Endothelial cell of umbilical vein (primary cell): ENCODE measurements at regions of chr1 and their contacts with region 1.

Region 1: GRCh38 chr1:151945725-151946364 is 36.5 kb upstream of the THEM4 start:
- DNase-seq: peak; percentile 90
- H3K4me3 ChIP-seq: no peak overlapping the region
- H3K27ac ChIP-seq: peak overlapping the region; percentile 58
- H3K4me1 ChIP-seq: peaks cover 19% of the 10 kb centered on the region
- H3K27me3 ChIP-seq: no peaks in the 10 kb centered on the region
- CTCF ChIP-seq: no peak
- POLR2A ChIP-seq: no peak

Region 2: DNA sequence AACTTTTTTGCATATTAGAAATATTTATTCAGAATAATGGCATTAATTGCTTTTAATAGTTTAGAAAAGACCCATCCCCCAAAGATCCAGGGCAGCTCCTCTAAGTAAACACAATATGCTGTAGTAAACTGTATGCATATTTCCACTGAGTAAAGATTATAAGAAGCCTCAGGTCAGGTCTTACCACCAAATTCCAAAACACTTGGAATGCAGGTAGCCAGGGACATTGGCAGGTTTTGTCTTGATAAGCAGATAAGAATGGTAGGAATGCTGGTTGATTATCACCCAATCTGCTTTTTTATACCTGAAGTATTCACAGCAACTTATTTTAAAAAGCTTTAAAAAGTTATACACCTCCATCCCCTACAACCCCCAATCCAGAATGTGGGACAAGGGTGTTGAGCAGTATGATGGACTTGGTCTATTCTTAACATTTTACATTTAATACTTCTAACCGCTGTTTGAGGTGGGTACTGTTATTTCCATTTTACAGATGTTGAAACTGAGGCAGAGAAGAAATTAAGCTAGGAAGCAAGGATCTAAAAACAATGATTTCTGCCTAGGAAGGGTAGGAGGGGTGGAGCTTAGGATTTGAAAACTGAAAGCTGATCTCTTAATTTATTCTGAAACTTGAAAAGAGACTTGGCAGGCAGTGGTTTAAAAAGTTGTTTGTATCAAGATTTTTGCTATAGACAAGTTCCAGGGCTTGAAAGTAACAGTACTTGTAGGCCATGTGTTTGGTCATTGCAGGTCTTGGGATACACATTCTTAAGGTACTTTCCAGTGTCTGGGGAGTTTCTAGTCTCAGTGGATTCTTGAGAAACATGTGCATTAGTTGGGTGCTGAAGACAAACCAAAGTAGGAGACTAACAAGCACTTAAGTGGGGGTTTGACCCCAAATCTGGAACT is 20.9 kb before region 1 on chr1:
- CTCF ChIA-PET with region 1: no interaction called
- POLR2A ChIA-PET with region 1: no interaction called
- dilution Hi-C with region 1: no loop called
- intact Hi-C with region 1: no loop called
- DNase-seq: no peak
- H3K4me3 ChIP-seq: no peak overlapping the region
- H3K27ac ChIP-seq: no peak overlapping the region
- H3K4me1 ChIP-seq: no peaks in the 10 kb centered on the region
- H3K27me3 ChIP-seq: peaks cover 2 to 5% of the 10 kb centered on the region in 2 experiments
- CTCF ChIP-seq: no peak
- POLR2A ChIP-seq: no peak

Region 3: DNA sequence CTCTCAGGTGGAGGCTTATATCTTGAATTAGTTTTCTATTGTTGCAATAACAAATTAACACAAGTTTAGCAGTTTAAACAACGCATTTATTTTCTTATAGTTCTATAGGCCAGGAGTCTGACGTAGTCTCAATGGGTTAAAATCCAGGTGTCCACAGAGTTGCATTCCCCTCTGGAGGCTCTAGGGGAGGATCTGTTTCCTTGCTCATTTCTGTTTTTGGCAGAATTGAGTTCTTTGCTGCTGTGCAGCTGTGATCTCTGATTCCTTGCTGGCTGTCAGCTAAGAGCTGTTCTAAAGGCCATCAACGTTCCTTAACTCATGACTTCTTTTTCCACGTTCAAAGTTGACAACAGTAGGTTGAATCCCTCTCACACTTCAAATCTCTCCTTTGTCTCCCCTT is 16.0 kb after region 1 on chr1:
- CTCF ChIA-PET with region 1: interaction called, 17 read pairs
- POLR2A ChIA-PET with region 1: no interaction called
- dilution Hi-C with region 1: no loop called
- intact Hi-C with region 1: loop called (anchors 2 kb)
- DNase-seq: peak; percentile 24
- H3K4me3 ChIP-seq: no peak overlapping the region
- H3K27ac ChIP-seq: no peak overlapping the region
- H3K4me1 ChIP-seq: peaks cover 27% of the 10 kb centered on the region
- H3K27me3 ChIP-seq: no peaks in the 10 kb centered on the region
- CTCF ChIP-seq: no peak
- POLR2A ChIP-seq: no peak

Region 4: GRCh38 chr1:151993654-151994496 is 48.0 kb after region 1 on chr1 and contains the start of gene S100A10:
- CTCF ChIA-PET with region 1: interaction called, 572 read pairs
- POLR2A ChIA-PET with region 1: no interaction called
- dilution Hi-C with region 1: no loop called
- intact Hi-C with region 1: loop called (anchors 1 kb)
- DNase-seq: peak; percentile 67
- H3K4me3 ChIP-seq: peak within 1 kb of the TSS; percentile 22 to 70 (median 67)
- H3K27ac ChIP-seq: peak within 1 kb of the TSS; percentile 83
- H3K4me1 ChIP-seq: peaks cover 44% of the 10 kb centered on the region
- H3K27me3 ChIP-seq: no peaks in the 10 kb centered on the region
- CTCF ChIP-seq: no peak
- POLR2A ChIP-seq: peak; percentile 87
- total RNA-seq, gene S100A10: 650 and 779 TPM in 2 replicates